AG04449 (cell line): ENCODE measurements at regions of chr9 and their contacts with region 1.

Region 1: DNA sequence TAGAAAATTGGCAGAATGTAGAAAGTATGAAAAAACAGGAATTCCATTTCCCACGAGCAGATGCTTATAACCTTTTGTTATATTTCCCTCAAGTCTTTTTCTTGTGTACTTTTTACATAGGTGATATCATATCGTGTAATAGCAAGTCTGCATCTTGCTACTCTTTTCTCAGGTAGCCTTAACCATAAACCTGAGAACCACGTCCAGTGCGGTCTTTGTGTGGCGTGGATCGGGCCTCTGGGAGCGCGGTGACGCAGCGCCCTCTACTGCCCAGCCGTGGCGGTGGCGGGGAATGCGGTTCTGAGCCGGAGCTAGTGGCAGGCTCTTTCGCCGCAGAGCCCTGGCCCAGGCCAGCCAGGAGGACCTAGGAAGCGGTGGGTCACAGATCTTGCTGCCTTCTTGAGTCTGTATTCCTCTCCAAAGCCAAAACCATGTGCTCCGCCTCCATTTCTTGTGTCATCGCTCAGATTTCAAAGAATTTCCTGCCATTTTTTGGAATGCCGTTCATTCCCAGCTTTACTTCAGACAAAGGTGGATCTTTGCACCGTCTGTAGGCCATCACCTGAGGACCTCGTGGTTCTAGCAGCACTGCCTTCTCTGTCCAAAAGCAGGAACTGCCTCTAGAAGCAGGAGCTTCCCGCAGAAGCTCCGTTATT is 71.9 kb downstream of the MVB12B start:
- DNase-seq: no peak
- H3K4me3 ChIP-seq: no peak overlapping the region
- CTCF ChIP-seq: peak; percentile 100

Region 2: GRCh38 chr9:125407974-125408900 is 990.3 kb before region 1 on chr9:
- CTCF ChIA-PET with region 1: interaction called, 13 read pairs
- POLR2A ChIA-PET with region 1: no interaction called
- DNase-seq: no peak
- H3K4me3 ChIP-seq: peak overlapping the region; percentile 67
- CTCF ChIP-seq: peak; percentile 93

Region 3: GRCh38 chr9:126173401-126173800 is 225.1 kb before region 1 on chr9:
- CTCF ChIA-PET with region 1: no interaction called
- POLR2A ChIA-PET with region 1: no interaction called
- DNase-seq: no peak
- H3K4me3 ChIP-seq: no peak overlapping the region
- CTCF ChIP-seq: no peak

Region 4: DNA sequence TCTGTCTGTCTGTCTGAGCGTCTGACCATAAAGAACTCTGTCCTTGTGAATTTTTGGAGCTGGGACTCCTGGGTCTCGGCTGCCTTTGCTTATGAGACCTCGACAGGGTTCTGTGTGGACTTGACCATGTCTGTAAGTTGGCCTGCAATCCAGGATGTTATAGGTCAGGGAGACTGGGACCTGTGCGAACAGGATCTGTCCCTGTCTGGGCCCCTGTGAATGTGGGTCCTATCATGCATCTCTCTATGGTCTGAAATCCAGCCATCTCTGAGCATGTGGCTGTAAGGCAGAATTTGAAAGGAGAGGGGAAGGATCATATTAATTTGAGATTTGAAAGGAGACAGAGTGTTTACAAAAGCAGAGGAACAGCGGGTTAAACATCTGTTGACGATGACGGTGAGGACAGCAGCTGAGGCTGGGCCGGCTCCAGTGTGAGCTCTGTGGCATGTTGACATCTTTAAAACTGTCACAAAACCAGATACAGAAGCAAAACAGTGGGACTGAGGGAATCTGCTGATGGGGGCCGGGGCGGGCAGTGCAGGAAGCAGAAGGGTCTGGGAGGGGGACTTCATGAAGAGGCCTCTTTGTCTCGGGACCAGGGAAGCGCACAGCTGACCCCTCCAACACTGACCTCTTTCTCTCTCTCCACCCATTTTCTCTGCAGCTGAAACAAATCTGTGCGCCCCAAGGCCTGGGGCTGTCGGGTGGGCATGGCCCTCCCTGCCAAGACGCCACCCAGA is 91.0 kb before region 1 on chr9:
- CTCF ChIA-PET with region 1: interaction called, 47 read pairs
- POLR2A ChIA-PET with region 1: no interaction called
- DNase-seq: no peak
- H3K4me3 ChIP-seq: no peak overlapping the region
- CTCF ChIP-seq: no peak

Region 5: DNA sequence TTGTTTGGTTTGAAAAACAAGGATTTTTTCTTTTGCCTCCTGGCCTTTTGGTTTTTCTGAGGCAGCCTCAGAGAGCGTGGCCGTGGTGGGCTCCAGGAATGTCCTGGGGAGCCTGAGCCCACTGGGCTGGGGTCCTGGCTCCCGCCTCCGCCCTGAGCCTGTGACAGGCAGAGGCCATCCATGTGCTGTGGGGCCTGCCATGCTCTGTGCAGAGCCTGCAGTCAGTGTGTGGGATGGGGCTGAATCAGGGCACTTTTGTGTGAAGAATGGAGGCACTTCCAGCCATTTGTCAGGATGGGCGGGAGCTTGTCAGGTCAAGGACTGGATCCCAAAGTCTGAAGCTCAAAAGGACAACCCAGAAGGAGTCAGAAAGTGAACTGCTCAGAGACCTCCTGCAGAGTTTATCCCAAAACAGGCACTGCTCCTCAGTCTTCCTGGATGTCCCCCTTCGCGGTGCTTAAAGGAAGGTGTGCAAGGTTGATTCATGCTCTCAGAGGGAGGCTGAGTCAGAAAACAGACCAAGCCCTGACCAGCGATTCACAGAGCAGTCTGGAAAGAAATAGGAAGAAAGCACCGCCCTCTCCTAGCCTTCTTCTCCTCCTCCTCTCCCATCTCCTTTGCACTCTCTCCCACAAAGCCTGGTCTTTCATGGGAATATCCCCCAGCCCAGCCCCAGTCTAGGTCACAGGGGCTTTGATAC is 18.7 kb before region 1 on chr9:
- CTCF ChIA-PET with region 1: interaction called, 49 read pairs
- POLR2A ChIA-PET with region 1: no interaction called
- DNase-seq: no peak
- H3K4me3 ChIP-seq: no peak overlapping the region
- CTCF ChIP-seq: no peak

Region 6: GRCh38 chr9:126420643-126421577 is 22.4 kb after region 1 on chr9:
- CTCF ChIA-PET with region 1: interaction called, 17 read pairs
- POLR2A ChIA-PET with region 1: no interaction called
- DNase-seq: no peak
- H3K4me3 ChIP-seq: no peak overlapping the region
- CTCF ChIP-seq: no peak

Region 7: DNA sequence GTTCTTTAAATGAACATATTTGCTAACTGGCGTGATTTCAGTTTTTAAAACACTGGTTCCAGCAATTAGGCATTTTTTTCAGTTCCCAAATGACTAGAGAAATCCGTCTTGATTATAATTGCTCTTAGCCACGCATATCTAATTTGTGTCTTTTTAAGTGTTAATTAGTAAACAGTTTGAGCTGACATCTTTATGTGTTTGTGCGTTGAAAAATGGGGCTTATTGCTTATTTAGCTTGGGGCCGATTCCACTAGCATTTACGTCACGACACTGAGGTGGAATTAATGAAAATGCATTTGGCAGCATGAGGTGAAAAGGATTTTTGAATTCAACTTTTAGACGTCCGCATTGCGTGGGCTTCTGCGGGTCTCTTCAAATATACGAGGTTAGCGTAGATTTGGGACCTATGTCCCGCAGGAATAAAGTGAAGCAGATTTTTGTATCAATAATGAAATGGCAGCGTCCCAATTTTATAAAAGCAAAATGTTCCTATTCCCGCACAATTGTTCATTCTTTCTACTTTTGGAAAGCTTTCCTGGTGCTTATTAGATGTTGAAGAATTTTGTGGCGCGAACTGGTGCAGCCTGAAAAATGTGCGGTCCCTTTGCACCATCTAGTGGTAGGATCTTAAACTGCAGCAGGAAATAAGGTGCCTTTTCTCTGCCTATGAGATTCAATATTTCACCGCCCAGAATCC is 92.5 kb after region 1 on chr9:
- CTCF ChIA-PET with region 1: interaction called, 90 read pairs
- POLR2A ChIA-PET with region 1: no interaction called
- DNase-seq: no peak
- H3K4me3 ChIP-seq: no peak overlapping the region
- CTCF ChIP-seq: peak; percentile 82

Region 8: DNA sequence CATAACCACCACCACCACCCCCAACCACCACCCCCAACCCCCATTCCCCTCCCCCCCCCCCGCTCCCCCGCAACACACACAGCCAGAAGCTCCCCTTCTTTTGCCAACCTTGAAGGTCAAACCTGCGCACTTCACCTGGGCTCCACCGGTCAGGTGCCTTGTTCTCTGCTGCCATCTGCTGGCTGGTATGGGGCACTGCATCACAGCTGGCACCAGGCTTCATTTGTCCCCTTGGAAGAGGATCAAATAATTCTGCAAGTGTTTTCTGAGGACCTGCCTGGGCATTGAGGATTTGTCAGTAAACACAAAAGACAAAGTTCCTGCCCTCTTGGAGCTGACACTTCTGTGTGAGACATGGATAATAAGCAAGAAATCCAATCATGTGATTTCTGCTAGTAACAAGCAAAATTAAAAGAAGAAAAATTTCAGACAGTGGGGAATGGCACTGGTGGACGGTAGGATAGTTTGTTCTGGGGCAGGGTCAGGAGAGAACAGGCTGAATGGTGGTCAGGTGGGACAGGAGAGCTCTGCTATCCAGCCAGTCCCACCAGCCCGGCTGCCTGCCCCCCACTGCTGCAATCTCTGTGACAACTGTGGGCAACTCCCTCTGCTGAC is 159.6 kb after region 1 on chr9:
- CTCF ChIA-PET with region 1: no interaction called
- POLR2A ChIA-PET with region 1: no interaction called
- DNase-seq: no peak
- H3K4me3 ChIP-seq: no peak overlapping the region
- CTCF ChIP-seq: peak; percentile 92

Region 9: GRCh38 chr9:126626127-126626925 is 227.8 kb after region 1 on chr9:
- CTCF ChIA-PET with region 1: no interaction called
- POLR2A ChIA-PET with region 1: no interaction called
- DNase-seq: no peak
- H3K4me3 ChIP-seq: no peak overlapping the region
- CTCF ChIP-seq: no peak